ENCODE measurements at regions of chr17 and their contacts with region 1.

Region 1: DNA sequence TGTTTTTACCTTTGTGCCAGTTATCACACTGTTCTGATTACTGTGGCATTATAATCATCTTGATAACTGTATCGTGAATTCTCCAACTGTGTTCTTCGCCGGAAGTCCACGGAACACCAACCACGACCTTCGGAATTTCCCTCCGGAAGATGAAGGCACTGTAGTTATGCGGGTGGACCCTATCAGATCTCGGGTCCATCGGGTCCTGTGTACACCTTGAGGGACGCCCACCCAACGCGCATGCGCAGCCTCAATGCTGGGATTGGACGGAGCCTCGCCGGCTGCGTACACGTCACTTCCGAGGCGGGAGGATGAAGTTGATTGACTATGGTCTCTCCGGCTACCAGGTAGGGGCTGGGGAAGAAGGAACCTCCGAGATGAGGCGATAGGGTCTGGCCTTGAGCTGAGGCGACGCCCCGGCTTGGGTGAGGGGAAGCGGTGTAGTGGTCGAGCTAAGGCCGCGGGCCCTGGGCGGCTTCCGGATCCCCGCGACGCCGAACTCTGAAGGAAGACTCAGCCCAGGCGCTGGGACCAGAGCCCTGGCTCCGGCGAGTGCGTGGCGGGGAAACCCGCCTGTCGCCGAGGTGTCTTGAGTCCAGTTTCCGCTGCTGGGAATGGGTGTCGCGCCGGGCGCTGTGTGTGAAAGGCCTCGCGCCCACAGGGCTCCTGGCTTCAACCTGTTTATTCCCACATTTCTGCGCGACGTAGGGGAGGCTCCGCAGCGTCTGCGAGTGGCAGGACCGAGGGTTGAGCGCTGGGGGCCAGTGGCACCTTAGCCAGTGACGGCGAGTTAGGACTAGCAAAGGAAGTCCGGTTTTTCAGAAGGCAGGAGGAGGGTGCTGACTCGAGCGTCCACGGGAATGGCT is at the start of gene DHRS7B:
- DNase-seq: peak; percentile 95
- ATAC-seq: peak; percentile 91
- H3K4me3 ChIP-seq: peak within 1 kb of the TSS; percentile 93
- H3K27ac ChIP-seq: peak within 1 kb of the TSS; percentile 72
- H3K4me1 ChIP-seq: no peaks in the 10 kb centered on the region; the same call in none of the 2 replicates
- H3K27me3 ChIP-seq: no peaks in the 10 kb centered on the region
- CTCF ChIP-seq: no peak
- EP300 ChIP-seq: no peak
- POLR2A ChIP-seq: peak; percentile 92
- RAD21 ChIP-seq: peak; percentile 32; the same call in 1 of the 2 replicates
- polyA plus RNA-seq, gene DHRS7B: 24.3 to 32.7 TPM

Region 2: GRCh38 chr17:21098934-21099689 is 27.8 kb before region 1 on chr17:
- CTCF ChIA-PET with region 1: interaction called, 9 read pairs
- POLR2A ChIA-PET with region 1: interaction called, 3 read pairs
- RAD21 ChIA-PET with region 1: no interaction called
- SMC1A ChIA-PET with region 1: interaction called, 4 read pairs
- in situ Hi-C with region 1: no loop called
- intact Hi-C with region 1: loop called (anchors 2 kb)
- DNase-seq: peak; percentile 65
- ATAC-seq: peak; percentile 99
- H3K4me3 ChIP-seq: peak overlapping the region; percentile 95
- H3K27ac ChIP-seq: peak overlapping the region; percentile 97
- H3K4me1 ChIP-seq: no peaks in the 10 kb centered on the region; the same call in 1 of the 2 replicates
- H3K27me3 ChIP-seq: no peaks in the 10 kb centered on the region
- CTCF ChIP-seq: no peak
- EP300 ChIP-seq: no peak
- POLR2A ChIP-seq: peak; percentile 48; the same call in 1 of the 2 replicates
- RAD21 ChIP-seq: no peak

Region 3: GRCh38 chr17:21171309-21171922 is 44.5 kb after region 1 on chr17:
- CTCF ChIA-PET with region 1: interaction called, 3 read pairs
- POLR2A ChIA-PET with region 1: no interaction called
- RAD21 ChIA-PET with region 1: no interaction called
- SMC1A ChIA-PET with region 1: interaction called, 3 read pairs
- in situ Hi-C with region 1: no loop called
- intact Hi-C with region 1: loop called (anchors 2 kb)
- DNase-seq: peak; percentile 51
- ATAC-seq: peak; percentile 93
- H3K4me3 ChIP-seq: peak overlapping the region; percentile 14; the same call in 1 of the 2 replicates
- H3K27ac ChIP-seq: peak overlapping the region; percentile 73
- H3K4me1 ChIP-seq: peaks cover 14% of the 10 kb centered on the region
- H3K27me3 ChIP-seq: no peaks in the 10 kb centered on the region
- CTCF ChIP-seq: no peak
- EP300 ChIP-seq: no peak
- POLR2A ChIP-seq: no peak
- RAD21 ChIP-seq: 0 out of 2 replicates have a peak, but pooled peaks have one; percentile 2

Region 4: GRCh38 chr17:21275579-21276263 is 148.8 kb after region 1 on chr17:
- CTCF ChIA-PET with region 1: interaction called, 32 read pairs
- POLR2A ChIA-PET with region 1: no interaction called
- RAD21 ChIA-PET with region 1: interaction called, 10 read pairs
- SMC1A ChIA-PET with region 1: interaction called, 9 read pairs
- in situ Hi-C with region 1: loop called (anchors 5 kb)
- intact Hi-C with region 1: no loop called
- DNase-seq: peak; percentile 43
- ATAC-seq: peak; percentile 97
- H3K4me3 ChIP-seq: peak overlapping the region; percentile 72
- H3K27ac ChIP-seq: no peak overlapping the region
- H3K4me1 ChIP-seq: peaks cover 10% of the 10 kb centered on the region
- H3K27me3 ChIP-seq: peaks cover 0 to 5% of the 10 kb centered on the region in 2 experiments; a peak in 3 of 4 replicates
- CTCF ChIP-seq: no peak
- EP300 ChIP-seq: no peak
- POLR2A ChIP-seq: peak; percentile 81
- RAD21 ChIP-seq: no peak

Region 5: GRCh38 chr17:21457051-21458026 is 330.5 kb after region 1 on chr17:
- CTCF ChIA-PET with region 1: no interaction called
- POLR2A ChIA-PET with region 1: no interaction called
- RAD21 ChIA-PET with region 1: no interaction called
- SMC1A ChIA-PET with region 1: no interaction called
- in situ Hi-C with region 1: no loop called
- intact Hi-C with region 1: loop called (anchors 10 kb)
- DNase-seq: peak; percentile 8
- ATAC-seq: peak; percentile 98
- H3K4me3 ChIP-seq: no peak overlapping the region
- H3K27ac ChIP-seq: no peak overlapping the region
- H3K4me1 ChIP-seq: no peaks in the 10 kb centered on the region
- H3K27me3 ChIP-seq: peaks cover 0 to 2% of the 10 kb centered on the region in 2 experiments; a peak in 2 of 4 replicates
- CTCF ChIP-seq: peak; percentile 67 to 84 (median 70)
- EP300 ChIP-seq: no peak
- POLR2A ChIP-seq: no peak
- RAD21 ChIP-seq: peak; percentile 52

Measured in GM12878 (cell line).